ENCODE measurements at regions of chr2 and their contacts with region 1.

Region 1: GRCh38 chr2:77484026-77484425 is 38.1 kb downstream of the LRRTM4 start:
- DNase-seq: peak; percentile 33
- H3K4me3 ChIP-seq: no peak overlapping the region
- H3K27ac ChIP-seq: no peak overlapping the region
- H3K4me1 ChIP-seq: no peaks in the 10 kb centered on the region
- H3K27me3 ChIP-seq: no peaks in the 10 kb centered on the region
- CTCF ChIP-seq: no peak

Region 2: GRCh38 chr2:76928026-76928425 is 556.0 kb before region 1 on chr2:
- CTCF ChIA-PET with region 1: no interaction called
- POLR2A ChIA-PET with region 1: no interaction called
- intact Hi-C with region 1: no loop called
- DNase-seq: no peak
- H3K4me3 ChIP-seq: no peak overlapping the region
- H3K27ac ChIP-seq: no peak overlapping the region
- H3K4me1 ChIP-seq: no peaks in the 10 kb centered on the region
- H3K27me3 ChIP-seq: no peaks in the 10 kb centered on the region
- CTCF ChIP-seq: no peak

Region 3: DNA sequence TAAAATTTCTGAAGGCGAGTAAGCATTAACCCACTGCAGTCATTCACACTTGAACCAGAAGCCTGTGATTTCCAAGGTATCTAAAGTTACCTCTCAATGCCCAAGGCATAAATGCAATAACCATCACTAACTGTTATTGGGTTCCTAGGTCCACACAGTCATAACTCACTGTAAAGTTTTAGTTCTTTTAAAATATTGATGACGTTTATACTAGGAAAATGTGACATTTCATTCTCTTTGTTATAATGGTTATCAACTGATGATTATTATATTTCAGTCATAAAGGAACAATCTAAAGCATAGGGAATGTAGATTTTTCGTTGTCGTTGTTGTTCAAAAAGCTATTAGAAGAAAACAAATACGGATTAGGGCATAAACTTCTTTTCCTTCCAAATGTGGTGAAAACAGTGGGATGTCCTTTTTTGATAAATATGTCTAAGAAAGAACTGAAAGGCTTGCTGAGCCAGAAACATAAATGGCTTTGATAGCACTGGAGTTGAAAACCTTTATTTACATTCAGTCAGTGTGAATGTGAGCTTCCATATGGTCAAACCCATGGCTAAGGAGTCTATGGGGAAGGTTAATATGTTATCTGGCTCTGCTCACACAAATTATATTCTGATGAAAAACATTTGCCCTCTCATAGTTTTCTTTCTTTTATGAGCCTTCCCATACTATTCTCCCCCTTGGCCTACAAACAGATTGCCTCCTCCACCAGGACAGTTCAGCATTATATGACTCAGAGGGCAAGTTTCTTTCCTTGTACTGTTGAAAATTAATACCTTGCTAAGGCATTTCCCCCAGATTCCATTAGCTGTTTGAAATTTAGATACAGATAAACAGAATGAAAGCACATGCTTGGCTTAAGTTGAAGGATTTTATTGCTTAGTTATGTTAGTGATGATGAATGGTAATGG is 506.3 kb before region 1 on chr2:
- CTCF ChIA-PET with region 1: interaction called, 22 read pairs
- POLR2A ChIA-PET with region 1: no interaction called
- intact Hi-C with region 1: no loop called
- DNase-seq: no peak
- H3K4me3 ChIP-seq: no peak overlapping the region
- H3K27ac ChIP-seq: no peak overlapping the region
- H3K4me1 ChIP-seq: no peaks in the 10 kb centered on the region
- H3K27me3 ChIP-seq: no peaks in the 10 kb centered on the region
- CTCF ChIP-seq: no peak

Region 4: GRCh38 chr2:77284353-77284752 is 199.7 kb before region 1 on chr2:
- CTCF ChIA-PET with region 1: no interaction called
- POLR2A ChIA-PET with region 1: no interaction called
- intact Hi-C with region 1: no loop called
- DNase-seq: no peak
- H3K4me3 ChIP-seq: no peak overlapping the region
- H3K27ac ChIP-seq: no peak overlapping the region
- H3K4me1 ChIP-seq: no peaks in the 10 kb centered on the region
- H3K27me3 ChIP-seq: no peaks in the 10 kb centered on the region
- CTCF ChIP-seq: no peak

Region 5: DNA sequence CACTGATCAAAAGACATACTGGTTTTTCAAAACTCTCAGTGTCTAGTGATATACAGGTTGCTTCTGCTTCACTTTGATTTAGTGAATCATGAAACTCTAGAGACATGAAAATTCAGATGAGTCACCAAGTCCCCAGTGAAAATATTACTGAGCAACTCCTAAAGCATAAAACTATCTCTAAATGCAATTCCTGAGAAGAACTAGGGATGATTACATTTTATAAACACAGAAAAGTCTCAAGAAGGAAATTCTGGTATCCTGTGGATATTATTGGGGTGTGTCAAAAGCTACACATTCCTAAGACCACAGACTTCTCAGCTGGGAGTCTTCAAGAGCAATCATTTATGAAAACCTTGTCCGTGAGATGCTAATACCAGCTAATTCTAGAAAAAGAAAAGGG is 28.5 kb after region 1 on chr2:
- CTCF ChIA-PET with region 1: no interaction called
- POLR2A ChIA-PET with region 1: no interaction called
- intact Hi-C with region 1: no loop called
- DNase-seq: peak; percentile 73
- H3K4me3 ChIP-seq: no peak overlapping the region
- H3K27ac ChIP-seq: peak overlapping the region; percentile 32
- H3K4me1 ChIP-seq: peaks cover 9% of the 10 kb centered on the region
- H3K27me3 ChIP-seq: no peaks in the 10 kb centered on the region
- CTCF ChIP-seq: no peak